Activated CD4-positive, alpha-beta memory T cell treated with anti-CD3 and anti-CD28 coated beads for 36 hours (primary cell): ENCODE measurements at regions of chr5 and their contacts with region 1.

Region 1: GRCh38 chr5:134041570-134042411 is 37.0 kb upstream of the VDAC1 start:
- DNase-seq: no peak
- H3K4me3 Mint-ChIP-seq: no peak overlapping the region
- H3K27ac Mint-ChIP-seq: no peak overlapping the region
- H3K4me1 Mint-ChIP-seq: peaks cover 39% of the 10 kb centered on the region
- H3K27me3 Mint-ChIP-seq: no peaks in the 10 kb centered on the region

Region 2: GRCh38 chr5:133814152-133814551 is 227.6 kb before region 1 on chr5:
- CTCF ChIA-PET with region 1: no interaction called
- POLR2A ChIA-PET with region 1: no interaction called
- intact Hi-C with region 1: no loop called
- DNase-seq: no peak
- H3K4me3 Mint-ChIP-seq: no peak overlapping the region
- H3K27ac Mint-ChIP-seq: no peak overlapping the region
- H3K4me1 Mint-ChIP-seq: peaks cover 2% of the 10 kb centered on the region
- H3K27me3 Mint-ChIP-seq: peaks cover 14% of the 10 kb centered on the region

Region 3: DNA sequence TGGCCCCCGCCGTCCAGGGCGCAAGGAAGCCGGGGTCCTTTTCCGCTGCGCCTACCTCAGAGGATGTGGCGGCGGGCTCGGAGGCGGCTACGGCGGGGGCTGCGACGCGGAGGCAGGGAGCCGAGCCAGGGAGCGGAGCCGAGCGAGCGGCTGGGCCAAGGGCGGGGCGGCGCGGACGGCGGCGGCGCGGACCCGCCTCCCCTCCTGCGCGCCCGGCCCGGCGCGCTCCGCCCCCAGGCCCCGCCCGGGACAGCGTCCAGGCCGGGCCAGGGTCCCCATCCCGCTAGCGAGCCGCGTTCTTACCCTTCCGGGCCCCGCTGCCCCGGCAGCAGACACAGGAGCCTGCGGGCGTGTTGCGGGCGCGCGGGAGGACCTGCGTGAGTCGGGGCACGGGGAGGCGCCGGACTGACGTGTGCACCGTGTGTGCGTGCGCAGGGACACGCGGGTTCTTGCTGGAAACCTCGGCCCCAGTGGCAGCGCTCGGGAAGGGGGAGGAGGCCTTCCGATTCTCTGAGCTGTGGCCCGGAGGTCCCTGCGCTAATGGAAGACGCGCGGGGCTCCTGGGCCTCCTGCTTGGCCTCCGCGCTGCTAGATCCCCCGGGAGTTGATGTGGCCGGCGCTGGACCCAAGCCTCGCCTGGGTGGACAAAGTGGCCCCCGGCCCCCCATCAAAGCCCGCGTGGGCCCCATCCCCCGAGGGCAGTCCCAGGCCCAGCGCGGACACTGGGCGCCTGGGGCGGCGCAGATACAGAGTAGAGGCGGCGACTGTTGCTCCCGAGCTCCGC is 37.0 kb before region 1 on chr5 and contains the start of gene VDAC1:
- CTCF ChIA-PET with region 1: interaction called, 41 read pairs
- POLR2A ChIA-PET with region 1: no interaction called
- intact Hi-C with region 1: loop called (anchors 2 kb)
- DNase-seq: peak; percentile 85
- H3K4me3 Mint-ChIP-seq: peak within 1 kb of the TSS; percentile 90
- H3K27ac Mint-ChIP-seq: peak within 1 kb of the TSS; percentile 97
- H3K4me1 Mint-ChIP-seq: peaks cover 37% of the 10 kb centered on the region
- H3K27me3 Mint-ChIP-seq: no peaks in the 10 kb centered on the region
- total RNA-seq, gene VDAC1: 407 to 416 TPM

Region 4: GRCh38 chr5:134070725-134071613 is 29.2 kb after region 1 on chr5:
- CTCF ChIA-PET with region 1: interaction called, 101 read pairs
- POLR2A ChIA-PET with region 1: interaction called, 3 read pairs
- intact Hi-C with region 1: no loop called
- DNase-seq: peak; percentile 58
- H3K4me3 Mint-ChIP-seq: peak overlapping the region; percentile 77
- H3K27ac Mint-ChIP-seq: peak overlapping the region; percentile 92
- H3K4me1 Mint-ChIP-seq: peaks cover 63% of the 10 kb centered on the region
- H3K27me3 Mint-ChIP-seq: no peaks in the 10 kb centered on the region

Region 5: DNA sequence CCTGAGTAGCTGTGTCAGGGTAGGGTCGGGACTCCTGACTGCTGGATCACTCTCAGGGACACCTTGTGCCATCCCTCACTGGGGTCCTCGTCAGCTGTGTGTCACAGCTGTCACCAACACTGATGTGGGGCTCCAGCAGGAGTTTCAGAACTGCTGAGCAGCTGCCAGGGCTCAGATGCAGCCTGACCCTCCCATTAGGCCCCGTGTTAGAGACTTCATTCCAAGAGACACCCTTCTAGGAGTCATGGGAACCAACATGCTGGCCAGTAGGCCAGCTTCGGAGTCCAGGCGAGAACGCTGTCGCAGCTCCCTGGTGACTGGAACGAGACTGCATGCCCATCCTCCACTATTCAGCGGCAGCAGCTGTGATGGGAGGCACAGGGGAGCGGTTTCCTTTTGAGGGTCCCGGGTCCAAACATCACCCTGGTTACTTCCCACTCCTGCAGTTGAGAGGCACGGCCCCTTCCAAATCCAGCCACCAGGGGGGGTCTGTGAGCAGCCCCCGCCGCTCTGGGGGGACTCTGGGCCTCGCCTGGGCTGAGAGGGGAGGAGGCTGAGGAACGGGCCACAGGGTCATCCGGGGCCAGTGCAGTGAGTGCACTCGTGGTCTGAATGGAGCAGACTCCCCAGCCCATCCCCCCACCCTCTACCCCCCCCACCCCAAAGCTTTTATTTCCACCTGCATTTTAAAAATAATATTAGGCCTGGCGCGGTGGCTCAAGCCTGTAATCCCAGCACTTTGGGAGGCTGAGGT is 60.1 kb after region 1 on chr5:
- CTCF ChIA-PET with region 1: interaction called, 9 read pairs
- POLR2A ChIA-PET with region 1: interaction called, 4 read pairs
- intact Hi-C with region 1: loop called (anchors 2 kb)
- DNase-seq: peak; percentile 83
- H3K4me3 Mint-ChIP-seq: peak overlapping the region; percentile 29
- H3K27ac Mint-ChIP-seq: no peak overlapping the region
- H3K4me1 Mint-ChIP-seq: peaks cover 82% of the 10 kb centered on the region
- H3K27me3 Mint-ChIP-seq: no peaks in the 10 kb centered on the region

Region 6: DNA sequence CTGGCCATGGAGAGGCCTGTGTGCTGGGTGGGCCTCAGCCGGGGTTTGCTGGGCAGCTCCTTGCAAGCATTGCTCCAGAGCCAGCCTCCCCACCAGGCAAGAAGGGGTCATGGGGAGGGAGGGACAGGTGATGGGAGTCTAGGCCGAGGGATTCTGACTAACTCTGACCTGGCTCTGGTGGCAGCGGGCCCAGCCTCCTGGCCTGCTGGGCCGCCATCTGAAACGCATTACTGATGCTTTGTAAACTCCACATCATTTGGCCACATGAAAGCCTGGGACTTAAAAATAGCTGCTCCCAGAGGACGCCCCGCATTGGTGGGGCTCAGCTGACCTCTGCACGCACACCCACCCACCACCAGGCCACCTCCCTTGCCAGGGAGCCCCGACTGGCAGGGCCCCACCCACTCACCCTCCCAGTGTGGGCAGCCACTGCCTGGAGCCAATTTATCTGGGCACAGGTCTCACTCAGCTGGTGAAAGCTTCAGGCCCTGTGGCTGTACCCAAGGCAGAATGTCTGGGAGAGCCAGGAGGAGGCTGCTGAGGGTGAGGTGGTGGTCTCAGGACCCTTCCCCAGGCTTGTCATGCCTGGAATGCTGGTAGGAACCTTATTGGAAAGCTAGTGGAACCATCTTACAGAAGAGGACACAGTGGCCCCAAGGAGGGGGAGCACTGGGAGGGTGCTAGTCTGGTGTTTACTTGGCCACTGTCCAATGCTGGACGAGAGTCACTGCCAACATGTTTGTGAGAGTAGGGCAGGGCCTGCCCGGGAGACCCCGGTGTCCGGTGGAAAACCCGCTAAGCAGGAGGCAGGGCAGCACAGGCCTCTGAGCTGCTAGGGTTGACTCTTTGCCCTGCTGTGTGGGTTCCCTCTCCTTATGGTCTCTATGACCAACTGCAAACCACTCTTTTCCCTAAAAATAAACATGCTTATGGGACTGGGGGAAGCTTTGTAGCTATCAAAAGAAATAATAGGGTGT is 83.5 kb after region 1 on chr5:
- CTCF ChIA-PET with region 1: interaction called, 981 read pairs
- POLR2A ChIA-PET with region 1: no interaction called
- intact Hi-C with region 1: no loop called
- DNase-seq: peak; percentile 49
- H3K4me3 Mint-ChIP-seq: peak overlapping the region; percentile 69
- H3K27ac Mint-ChIP-seq: peak overlapping the region; percentile 90
- H3K4me1 Mint-ChIP-seq: peaks cover 99% of the 10 kb centered on the region
- H3K27me3 Mint-ChIP-seq: no peaks in the 10 kb centered on the region

Region 7: DNA sequence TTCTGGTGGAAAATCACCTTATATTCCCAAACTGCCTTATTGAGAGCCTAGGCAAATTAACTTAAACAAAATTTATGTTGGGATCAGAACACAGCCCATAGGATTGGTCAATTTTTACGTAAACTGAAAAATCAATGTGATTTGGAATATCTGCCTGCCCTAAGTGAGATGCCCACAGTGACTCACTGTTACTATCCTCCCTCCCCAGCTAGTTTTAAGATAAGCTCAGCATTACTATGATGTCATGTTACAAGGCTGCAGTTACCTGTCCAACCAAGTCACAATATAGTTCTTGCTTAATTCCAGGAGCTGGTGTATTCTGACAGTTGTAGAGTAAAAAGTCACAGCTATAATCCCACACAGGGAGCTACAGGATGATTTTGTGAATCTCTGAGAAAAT is 111.9 kb after region 1 on chr5:
- CTCF ChIA-PET with region 1: interaction called, 981 read pairs
- POLR2A ChIA-PET with region 1: no interaction called
- intact Hi-C with region 1: no loop called
- DNase-seq: no peak
- H3K4me3 Mint-ChIP-seq: no peak overlapping the region
- H3K27ac Mint-ChIP-seq: peak overlapping the region; percentile 52
- H3K4me1 Mint-ChIP-seq: peaks cover 58% of the 10 kb centered on the region
- H3K27me3 Mint-ChIP-seq: no peaks in the 10 kb centered on the region

Region 8: DNA sequence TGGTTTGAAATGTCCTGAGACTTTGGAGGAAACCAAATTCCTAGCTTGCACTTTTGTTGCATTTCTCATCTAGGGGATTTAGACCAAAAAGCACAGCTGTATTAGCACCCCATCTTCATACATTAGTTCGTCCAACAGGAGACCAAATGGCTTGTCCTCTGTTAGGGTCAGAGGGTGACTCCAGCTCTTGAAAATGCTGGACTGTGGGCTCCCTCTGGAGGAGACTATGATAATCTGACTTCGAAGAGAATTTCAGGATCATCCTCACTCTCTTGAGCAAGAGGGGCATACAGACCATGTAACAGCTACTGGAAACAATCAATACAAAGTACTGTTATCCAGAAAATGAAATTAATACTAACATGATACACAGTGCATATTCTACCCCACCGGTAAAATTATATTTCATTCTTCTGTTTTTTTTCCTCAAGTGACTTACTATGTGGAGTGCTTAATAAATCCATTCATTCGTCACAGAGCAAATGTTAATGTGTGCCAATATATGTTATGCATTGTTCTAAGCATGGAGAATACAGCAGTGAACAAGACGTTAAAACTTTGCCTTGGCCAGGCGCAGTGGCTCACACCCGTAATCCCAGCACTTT is 247.8 kb after region 1 on chr5:
- CTCF ChIA-PET with region 1: interaction called, 7 read pairs
- POLR2A ChIA-PET with region 1: no interaction called
- intact Hi-C with region 1: loop called (anchors 5 kb)
- DNase-seq: peak; percentile 42
- H3K4me3 Mint-ChIP-seq: no peak overlapping the region
- H3K27ac Mint-ChIP-seq: no peak overlapping the region
- H3K4me1 Mint-ChIP-seq: peaks cover 2% of the 10 kb centered on the region
- H3K27me3 Mint-ChIP-seq: peaks cover 5% of the 10 kb centered on the region